Cardiac septum (tissue), 1 donor: ENCODE measurements at regions of chr10 and their contacts with region 1.

Region 1: DNA sequence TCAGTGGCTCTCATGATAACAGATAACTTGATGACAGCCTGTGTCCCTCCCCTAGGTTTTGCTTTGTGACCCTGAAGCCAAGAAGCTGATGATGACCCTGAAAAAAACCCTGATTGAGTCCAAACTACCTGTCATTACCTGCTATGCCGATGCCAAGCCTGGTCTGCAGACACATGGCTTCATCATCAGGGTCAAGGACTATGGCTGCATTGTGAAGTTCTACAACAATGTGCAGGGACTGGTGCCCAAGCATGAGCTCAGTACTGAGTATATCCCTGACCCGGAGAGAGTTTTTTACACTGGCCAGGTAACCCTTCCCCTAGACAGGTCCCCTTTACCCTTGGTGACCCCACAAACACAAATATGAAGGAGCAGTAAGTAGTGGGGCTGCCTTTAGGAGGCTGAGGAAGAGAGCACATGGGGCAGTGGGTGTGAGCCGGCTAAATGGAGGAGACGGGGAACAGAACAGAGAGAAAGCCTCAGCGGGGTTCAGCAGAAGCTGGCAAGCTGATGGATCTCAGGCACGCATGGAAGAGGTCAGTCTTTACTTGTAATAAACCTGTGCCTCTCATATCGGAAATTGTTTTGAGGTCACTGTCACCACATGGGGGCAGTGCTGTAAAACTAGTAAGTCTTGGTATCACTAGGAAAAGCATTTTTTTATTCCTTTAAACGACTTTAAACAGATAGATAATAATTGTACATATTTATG is 20.2 kb downstream of the PDCD11 start:
- DNase-seq: no peak

Region 2: GRCh38 chr10:103481974-103482531 is 65.5 kb after region 1 on chr10:
- intact Hi-C with region 1: loop called (anchors 2 kb)
- DNase-seq: no peak

Region 3: DNA sequence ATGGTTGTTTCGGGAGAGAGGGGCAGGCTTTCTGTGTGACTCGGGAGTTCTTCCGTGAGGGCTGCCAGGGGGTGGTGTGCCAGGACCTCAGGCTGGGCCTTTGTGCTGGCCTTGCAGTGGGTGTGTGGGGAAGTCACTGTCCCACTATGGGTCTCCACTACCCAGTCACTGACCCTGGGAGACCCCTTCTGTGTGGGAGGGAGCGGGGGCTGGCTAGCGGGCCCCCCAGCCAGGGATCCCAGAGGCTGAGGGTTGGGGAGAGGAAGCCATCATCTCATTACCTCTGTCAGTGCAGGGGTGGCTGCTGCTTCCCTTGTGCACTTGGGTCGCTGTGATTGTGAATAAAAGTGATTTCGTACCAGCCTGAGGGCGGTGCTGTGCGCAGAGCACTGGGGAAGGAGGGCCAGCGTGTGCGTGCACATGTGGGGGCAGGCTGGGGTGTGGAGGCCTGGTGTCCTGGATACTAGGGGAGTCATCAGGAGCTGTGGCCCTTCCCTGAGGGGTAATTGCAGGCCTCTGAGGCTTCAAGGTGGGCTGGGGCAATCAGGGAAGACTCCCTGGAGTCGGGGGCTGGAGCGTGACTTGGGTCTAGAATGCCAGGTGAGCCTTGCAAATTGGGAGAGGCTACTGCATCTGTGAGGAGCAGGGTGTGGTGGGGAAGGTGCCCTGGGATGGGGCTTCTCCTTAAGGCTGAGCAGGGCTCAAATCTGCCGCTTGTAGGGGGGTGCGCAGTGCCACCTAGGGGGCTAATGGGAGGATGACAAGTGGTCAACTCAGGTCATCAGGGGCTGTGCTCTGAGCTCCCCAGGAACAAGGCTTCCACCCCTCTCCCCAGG is 175.8 kb after region 1 on chr10:
- intact Hi-C with region 1: loop called (anchors 5 kb)
- DNase-seq: no peak